Transverse colon (tissue), 4 donors: ENCODE measurements at regions of chr3 and their contacts with region 1.

Region 1: GRCh38 chr3:193572426-193572908 is 17.8 kb upstream of the ATP13A4 start:
- DNase-seq: peak; percentile 58
- H3K4me3 ChIP-seq: no peak overlapping the region
- H3K27ac ChIP-seq: no peak overlapping the region
- H3K4me1 ChIP-seq: no peaks in the 10 kb centered on the region
- H3K27me3 ChIP-seq: no peaks in the 10 kb centered on the region
- CTCF ChIP-seq: peak; percentile 66 to 73 (median 71)
- EP300 ChIP-seq: no peak
- POLR2A ChIP-seq: no peak

Region 2: GRCh38 chr3:192467230-192468140 is 1105.0 kb before region 1 on chr3:
- in situ Hi-C with region 1: loop called in 1 of 4 experiments (anchors 25 kb)
- intact Hi-C with region 1: no loop called
- DNase-seq: peak; percentile 53
- H3K4me3 ChIP-seq: no peak overlapping the region
- H3K27ac ChIP-seq: no peak overlapping the region
- H3K4me1 ChIP-seq: no peaks in the 10 kb centered on the region
- H3K27me3 ChIP-seq: peaks cover 14% of the 10 kb centered on the region
- CTCF ChIP-seq: peak; percentile 60 to 90 (median 84)
- EP300 ChIP-seq: no peak
- POLR2A ChIP-seq: no peak

Region 3: GRCh38 chr3:192802957-192803899 is 769.2 kb before region 1 on chr3:
- in situ Hi-C with region 1: loop called in 1 of 4 experiments (anchors 25 kb)
- intact Hi-C with region 1: no loop called
- DNase-seq: no peak
- H3K4me3 ChIP-seq: no peak overlapping the region
- H3K27ac ChIP-seq: no peak overlapping the region
- H3K4me1 ChIP-seq: no peaks in the 10 kb centered on the region
- H3K27me3 ChIP-seq: no peaks in the 10 kb centered on the region
- CTCF ChIP-seq: peak; percentile 34 to 48 (median 41)
- EP300 ChIP-seq: no peak
- POLR2A ChIP-seq: no peak

Region 4: GRCh38 chr3:192825657-192826200 is 746.7 kb before region 1 on chr3:
- in situ Hi-C with region 1: loop called in 2 of 4 experiments (anchors 10 to 25 kb)
- intact Hi-C with region 1: no loop called
- DNase-seq: peak; percentile 9
- H3K4me3 ChIP-seq: no peak overlapping the region
- H3K27ac ChIP-seq: peak overlapping the region in 1 of 4 donors; percentile 4
- H3K4me1 ChIP-seq: peaks cover 0 to 11% (median 5%) of the 10 kb centered on the region in 4 donors
- H3K27me3 ChIP-seq: no peaks in the 10 kb centered on the region
- CTCF ChIP-seq: peak in 1 of 5 experiments; percentile 19
- EP300 ChIP-seq: no peak
- POLR2A ChIP-seq: no peak

Region 5: GRCh38 chr3:193452338-193452737 is 120.1 kb before region 1 on chr3:
- in situ Hi-C with region 1: loop called in 1 of 4 experiments (anchors 25 kb)
- intact Hi-C with region 1: no loop called
- DNase-seq: no peak
- H3K4me3 ChIP-seq: no peak overlapping the region
- H3K27ac ChIP-seq: no peak overlapping the region
- H3K4me1 ChIP-seq: no peaks in the 10 kb centered on the region
- H3K27me3 ChIP-seq: no peaks in the 10 kb centered on the region
- CTCF ChIP-seq: no peak
- EP300 ChIP-seq: no peak
- POLR2A ChIP-seq: no peak